Activated naive CD4-positive, alpha-beta T cell treated with anti-CD3 and anti-CD28 coated beads for 36 hours (primary cell): ENCODE measurements at regions of chr2 and their contacts with region 1.

Region 1: GRCh38 chr2:204948024-204948763 is 402.9 kb downstream of the PARD3B start:
- DNase-seq: peak; percentile 12
- H3K4me3 Mint-ChIP-seq: no peak overlapping the region
- H3K27ac Mint-ChIP-seq: peak overlapping the region; percentile 66
- H3K4me1 Mint-ChIP-seq: peaks cover 53% of the 10 kb centered on the region
- H3K27me3 Mint-ChIP-seq: no peaks in the 10 kb centered on the region

Region 2: GRCh38 chr2:204958371-204958770 is 10.2 kb after region 1 on chr2:
- CTCF ChIA-PET with region 1: no interaction called
- intact Hi-C with region 1: loop called (anchors 1 kb)
- DNase-seq: no peak
- H3K4me3 Mint-ChIP-seq: peak overlapping the region; percentile 54
- H3K27ac Mint-ChIP-seq: no peak overlapping the region
- H3K4me1 Mint-ChIP-seq: peaks cover 20% of the 10 kb centered on the region
- H3K27me3 Mint-ChIP-seq: no peaks in the 10 kb centered on the region